ENCODE measurements at regions of chr4 and their contacts with region 1.

Region 1: GRCh38 chr4:38856524-38857337 is at the start of gene TLR6:
- DNase-seq: peak; percentile 25 to 79 (median 65)
- H3K4me3 ChIP-seq: peak within 1 kb of the TSS; percentile 11
- H3K4me3 Mint-ChIP-seq: peak within 1 kb of the TSS; percentile 71 to 87 (median 84)
- H3K27ac ChIP-seq: no peak within 1 kb of the TSS
- H3K27ac Mint-ChIP-seq: peak within 1 kb of the TSS; percentile 15 to 89 (median 64)
- H3K4me1 ChIP-seq: peaks cover 23% of the 10 kb centered on the region
- H3K4me1 Mint-ChIP-seq: peaks cover 19 to 27% (median 25%) of the 10 kb centered on the region in 3 donors
- H3K27me3 ChIP-seq: no peaks in the 10 kb centered on the region
- H3K27me3 Mint-ChIP-seq: peaks cover 5 to 11% of the 10 kb centered on the region in 2 donors
- total RNA-seq, gene TLR6: 1.2 TPM

Region 2: DNA sequence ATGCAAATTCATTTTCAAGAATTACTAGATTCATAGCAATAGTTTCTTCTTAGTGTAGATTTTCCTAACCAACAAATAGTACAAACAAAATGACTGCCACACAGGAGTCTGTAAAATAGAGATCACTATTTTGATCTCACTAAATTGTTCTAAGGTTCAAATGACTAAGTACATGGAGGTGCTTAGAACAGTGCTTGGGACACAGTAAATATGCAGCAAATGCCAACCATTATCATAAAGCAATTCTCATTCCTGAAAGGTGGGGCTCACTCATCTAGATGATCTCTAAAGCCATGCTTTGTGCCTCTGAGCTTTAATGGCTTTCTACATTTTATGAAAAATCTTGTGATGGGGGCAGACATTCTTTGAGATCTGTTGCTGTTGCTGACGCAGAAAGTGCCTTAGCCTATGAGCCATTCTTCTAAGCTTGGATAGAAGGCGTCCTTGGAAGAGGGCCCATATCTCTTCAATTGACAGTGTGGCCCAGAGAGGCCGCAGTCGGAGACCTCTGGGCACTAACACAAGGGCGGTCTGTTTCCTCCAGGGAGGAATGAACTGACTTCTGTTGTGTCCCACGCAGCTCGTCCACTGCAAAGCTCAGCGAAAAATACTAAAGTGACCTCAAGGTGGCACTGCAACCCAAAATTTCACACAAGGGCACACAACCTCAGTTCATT is 97.5 kb before region 1 on chr4:
- CTCF ChIA-PET with region 1: interaction called, 62 read pairs
- POLR2A ChIA-PET with region 1: interaction called, 4 read pairs
- DNase-seq: peak in 4 of 5 donors; percentile 13 to 68 (median 54)
- H3K4me3 ChIP-seq: no peak overlapping the region
- H3K4me3 Mint-ChIP-seq: no peak overlapping the region
- H3K27ac ChIP-seq: no peak overlapping the region
- H3K27ac Mint-ChIP-seq: no peak overlapping the region
- H3K4me1 ChIP-seq: no peaks in the 10 kb centered on the region
- H3K4me1 Mint-ChIP-seq: peaks cover 4 to 10% (median 8%) of the 10 kb centered on the region in 3 donors
- H3K27me3 ChIP-seq: no peaks in the 10 kb centered on the region
- H3K27me3 Mint-ChIP-seq: peaks cover 0 to 11% of the 10 kb centered on the region in 2 donors

Region 3: GRCh38 chr4:38768968-38769394 is 87.8 kb before region 1 on chr4:
- CTCF ChIA-PET with region 1: interaction called, 11 read pairs
- POLR2A ChIA-PET with region 1: no interaction called
- DNase-seq: no peak
- H3K4me3 ChIP-seq: no peak overlapping the region
- H3K4me3 Mint-ChIP-seq: no peak overlapping the region
- H3K27ac ChIP-seq: no peak overlapping the region
- H3K27ac Mint-ChIP-seq: no peak overlapping the region
- H3K4me1 ChIP-seq: no peaks in the 10 kb centered on the region
- H3K4me1 Mint-ChIP-seq: no peaks in the 10 kb centered on the region
- H3K27me3 ChIP-seq: no peaks in the 10 kb centered on the region
- H3K27me3 Mint-ChIP-seq: peaks cover 3 to 19% of the 10 kb centered on the region in 2 donors

Region 4: GRCh38 chr4:38782452-38783108 is 74.2 kb before region 1 on chr4 and contains the start of gene TLR10:
- CTCF ChIA-PET with region 1: interaction called, 13 read pairs
- POLR2A ChIA-PET with region 1: no interaction called
- DNase-seq: peak in 4 of 5 donors; percentile 11 to 52 (median 32)
- H3K4me3 ChIP-seq: no peak within 1 kb of the TSS
- H3K4me3 Mint-ChIP-seq: peak within 1 kb of the TSS in 1 of 7 donors; percentile 24
- H3K27ac ChIP-seq: no peak within 1 kb of the TSS
- H3K27ac Mint-ChIP-seq: peak within 1 kb of the TSS in 1 of 8 donors; percentile 13
- H3K4me1 ChIP-seq: peaks cover 6% of the 10 kb centered on the region
- H3K4me1 Mint-ChIP-seq: peaks cover 3 to 6% (median 4%) of the 10 kb centered on the region in 3 donors
- H3K27me3 ChIP-seq: no peaks in the 10 kb centered on the region
- H3K27me3 Mint-ChIP-seq: peaks cover 2 to 8% of the 10 kb centered on the region in 2 donors
- total RNA-seq, gene TLR10: not detected

Region 5: GRCh38 chr4:38804654-38805295 is 52.0 kb before region 1 on chr4 and contains the start of gene TLR1:
- CTCF ChIA-PET with region 1: interaction called, 14 read pairs
- POLR2A ChIA-PET with region 1: no interaction called
- DNase-seq: peak in 2 of 5 donors; percentile 47 to 57
- H3K4me3 ChIP-seq: peak within 1 kb of the TSS; percentile 61
- H3K4me3 Mint-ChIP-seq: peak within 1 kb of the TSS; percentile 83 to 92 (median 87)
- H3K27ac ChIP-seq: no peak within 1 kb of the TSS
- H3K27ac Mint-ChIP-seq: peak within 1 kb of the TSS; percentile 36 to 96 (median 93)
- H3K4me1 ChIP-seq: peaks cover 8% of the 10 kb centered on the region
- H3K4me1 Mint-ChIP-seq: peaks cover 31 to 44% (median 36%) of the 10 kb centered on the region in 3 donors
- H3K27me3 ChIP-seq: no peaks in the 10 kb centered on the region
- H3K27me3 Mint-ChIP-seq: no peaks in the 10 kb centered on the region
- total RNA-seq, gene TLR1: 1.3 to 2.1 TPM

Region 6: GRCh38 chr4:39103291-39103690 is 246.6 kb after region 1 on chr4:
- CTCF ChIA-PET with region 1: no interaction called
- POLR2A ChIA-PET with region 1: interaction called, 11 read pairs
- DNase-seq: no peak
- H3K4me3 ChIP-seq: no peak overlapping the region
- H3K4me3 Mint-ChIP-seq: no peak overlapping the region
- H3K27ac ChIP-seq: no peak overlapping the region
- H3K27ac Mint-ChIP-seq: no peak overlapping the region
- H3K4me1 ChIP-seq: no peaks in the 10 kb centered on the region
- H3K4me1 Mint-ChIP-seq: no peaks in the 10 kb centered on the region
- H3K27me3 ChIP-seq: no peaks in the 10 kb centered on the region
- H3K27me3 Mint-ChIP-seq: no peaks in the 10 kb centered on the region

Region 7: DNA sequence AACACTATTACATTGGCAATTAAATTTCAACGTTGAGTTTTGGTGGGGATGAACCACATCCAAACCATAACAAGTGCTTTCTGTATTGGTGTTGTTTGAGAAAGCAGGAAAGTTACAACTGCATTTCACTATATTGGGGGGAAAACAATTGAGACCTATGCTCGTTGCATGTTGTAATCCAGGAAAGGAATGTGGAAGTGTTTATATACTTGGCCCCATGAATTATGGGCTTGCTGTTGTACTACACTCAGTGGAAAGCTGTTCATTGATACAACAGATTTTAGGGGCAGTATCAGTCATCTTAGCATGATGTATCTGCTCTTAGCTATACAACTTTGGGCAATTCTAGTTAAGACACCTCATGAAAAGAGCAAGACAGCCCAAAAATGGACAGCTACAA is 257.7 kb after region 1 on chr4:
- CTCF ChIA-PET with region 1: no interaction called
- POLR2A ChIA-PET with region 1: no interaction called
- DNase-seq: no peak
- H3K4me3 ChIP-seq: no peak overlapping the region
- H3K4me3 Mint-ChIP-seq: no peak overlapping the region
- H3K27ac ChIP-seq: no peak overlapping the region
- H3K27ac Mint-ChIP-seq: no peak overlapping the region
- H3K4me1 ChIP-seq: peaks cover 19% of the 10 kb centered on the region
- H3K4me1 Mint-ChIP-seq: peaks cover 17 to 26% (median 25%) of the 10 kb centered on the region in 3 donors
- H3K27me3 ChIP-seq: no peaks in the 10 kb centered on the region
- H3K27me3 Mint-ChIP-seq: no peaks in the 10 kb centered on the region